ENCODE measurements at regions of chr17 and their contacts with region 1.

Region 1: GRCh38 chr17:17919169-17920107 is 52.8 kb downstream of the TOM1L2 start:
- DNase-seq: peak; percentile 36
- H3K4me3 Mint-ChIP-seq: no peak overlapping the region
- H3K27ac Mint-ChIP-seq: no peak overlapping the region
- H3K4me1 Mint-ChIP-seq: peaks cover 7% of the 10 kb centered on the region
- H3K27me3 Mint-ChIP-seq: no peaks in the 10 kb centered on the region

Region 2: DNA sequence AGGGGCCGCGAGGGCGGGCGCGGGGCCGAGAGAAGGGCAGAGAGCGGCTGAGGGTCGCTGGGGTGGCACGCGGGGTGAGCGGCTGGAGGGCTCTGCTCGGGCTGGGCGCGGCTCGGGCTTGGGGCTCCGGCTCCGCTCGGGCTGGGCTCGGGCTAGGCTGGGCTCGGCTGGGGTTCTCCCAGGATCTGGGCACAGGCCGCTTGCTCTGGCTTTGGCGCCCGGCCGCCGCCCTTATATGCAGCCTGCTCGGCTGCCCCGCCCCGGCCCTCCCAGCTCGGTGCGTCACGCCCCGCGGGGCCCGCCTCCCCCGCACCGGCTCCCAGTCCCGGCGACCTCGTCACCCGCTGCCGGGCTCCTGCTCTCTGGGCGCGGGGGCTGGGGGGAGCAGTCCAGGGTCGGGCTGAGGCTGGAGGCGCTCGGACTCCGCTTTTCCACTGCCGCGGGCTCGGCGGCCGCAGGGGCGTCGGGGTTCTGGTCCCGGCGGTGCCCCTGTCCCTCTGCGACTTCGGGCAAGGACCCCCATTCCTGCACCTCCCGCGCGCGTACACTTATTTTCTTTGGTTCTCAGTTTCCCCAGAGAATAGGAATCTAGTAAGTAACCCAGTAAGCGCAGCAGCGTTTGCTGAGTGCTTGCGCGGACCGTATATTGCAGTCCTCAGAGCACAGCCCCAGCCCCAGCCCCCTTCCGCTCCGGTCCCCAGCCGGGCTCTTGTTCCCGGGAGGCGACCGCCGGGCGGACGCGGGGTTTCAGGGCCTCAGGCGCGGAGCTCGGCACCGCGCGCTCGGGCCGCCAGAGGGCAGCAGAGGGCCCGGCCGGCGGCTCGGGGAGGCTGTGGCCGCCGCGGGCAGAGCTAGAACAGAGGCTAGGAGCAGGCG is 423.0 kb before region 1 on chr17 and contains the start of gene RASD1:
- intact Hi-C with region 1: loop called (anchors 2 kb)
- DNase-seq: peak; percentile 74
- H3K4me3 Mint-ChIP-seq: peak within 1 kb of the TSS; percentile 78
- H3K27ac Mint-ChIP-seq: peak within 1 kb of the TSS; percentile 61
- H3K4me1 Mint-ChIP-seq: peaks cover 14% of the 10 kb centered on the region
- H3K27me3 Mint-ChIP-seq: peaks cover 14% of the 10 kb centered on the region
- total RNA-seq, gene RASD1: 10.1 and 12.9 TPM in 2 replicates

Region 3: DNA sequence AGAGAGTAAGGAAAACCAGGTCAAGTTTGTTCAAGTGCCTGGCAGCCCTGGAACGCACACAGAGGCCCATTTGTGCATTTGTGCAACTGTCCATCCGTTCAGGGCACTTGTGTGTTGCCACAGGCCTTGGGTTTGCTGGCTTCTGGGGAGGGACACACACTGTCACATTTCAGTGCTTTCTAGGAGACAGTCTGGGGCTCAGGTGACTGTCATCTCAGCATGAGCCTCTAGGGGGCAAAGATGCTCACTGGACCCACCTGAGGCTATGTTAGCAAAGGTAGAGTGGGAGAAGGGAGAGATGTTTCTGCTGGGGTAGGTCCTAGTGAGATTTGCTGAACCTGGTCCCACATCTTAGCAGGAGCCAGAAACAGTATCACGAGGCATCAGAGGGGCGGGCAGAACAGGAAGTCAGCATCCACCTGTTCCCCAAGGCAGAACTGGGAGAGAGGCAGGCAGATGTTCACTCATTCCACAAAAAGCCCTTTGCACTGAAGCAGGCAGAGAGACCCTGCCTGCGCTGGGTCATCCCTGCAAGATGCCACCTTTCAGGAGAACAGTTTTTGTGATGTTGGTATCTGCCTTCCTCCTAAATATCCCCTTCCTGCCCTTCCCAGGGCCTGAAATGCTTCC is 189.7 kb before region 1 on chr17:
- intact Hi-C with region 1: loop called (anchors 1 kb)
- DNase-seq: peak; percentile 41
- H3K4me3 Mint-ChIP-seq: no peak overlapping the region
- H3K27ac Mint-ChIP-seq: no peak overlapping the region
- H3K4me1 Mint-ChIP-seq: peaks cover 16% of the 10 kb centered on the region
- H3K27me3 Mint-ChIP-seq: peaks cover 5% of the 10 kb centered on the region

Region 4: GRCh38 chr17:17859909-17860765 is 59.3 kb before region 1 on chr17:
- intact Hi-C with region 1: loop called (anchors 2 kb)
- DNase-seq: peak; percentile 59
- H3K4me3 Mint-ChIP-seq: no peak overlapping the region
- H3K27ac Mint-ChIP-seq: no peak overlapping the region
- H3K4me1 Mint-ChIP-seq: peaks cover 24% of the 10 kb centered on the region
- H3K27me3 Mint-ChIP-seq: no peaks in the 10 kb centered on the region

Region 5: GRCh38 chr17:18033442-18034099 is 114.1 kb after region 1 on chr17:
- intact Hi-C with region 1: loop called (anchors 1 kb)
- DNase-seq: peak; percentile 57
- H3K4me3 Mint-ChIP-seq: no peak overlapping the region
- H3K27ac Mint-ChIP-seq: peak overlapping the region; percentile 21
- H3K4me1 Mint-ChIP-seq: peaks cover 38% of the 10 kb centered on the region
- H3K27me3 Mint-ChIP-seq: no peaks in the 10 kb centered on the region

Measured in activated T-helper 1 cell treated with anti-CD3 and anti-CD28 coated beads, Interleukin-12 subunit alpha, Interleukin-12 subunit beta, Interleukin-2, Interleukin-4 antibody, amounts not matched to agents 30 ng/mL and 10 ng/mL and 1 ng/mL, durations not matched to agents 14 hours and 24 hours and 36 hours (primary cell).